ENCODE measurements at regions of chr4 and their contacts with region 1.

Region 1: GRCh38 chr4:118280501-118281218 is 72.1 kb downstream of the PRSS12 start:
- DNase-seq: no peak
- ATAC-seq: peak; percentile 38

Region 2: GRCh38 chr4:117447925-117448324 is 832.7 kb before region 1 on chr4:
- intact Hi-C with region 1: no loop called
- DNase-seq: no peak
- ATAC-seq: no peak

Region 3: DNA sequence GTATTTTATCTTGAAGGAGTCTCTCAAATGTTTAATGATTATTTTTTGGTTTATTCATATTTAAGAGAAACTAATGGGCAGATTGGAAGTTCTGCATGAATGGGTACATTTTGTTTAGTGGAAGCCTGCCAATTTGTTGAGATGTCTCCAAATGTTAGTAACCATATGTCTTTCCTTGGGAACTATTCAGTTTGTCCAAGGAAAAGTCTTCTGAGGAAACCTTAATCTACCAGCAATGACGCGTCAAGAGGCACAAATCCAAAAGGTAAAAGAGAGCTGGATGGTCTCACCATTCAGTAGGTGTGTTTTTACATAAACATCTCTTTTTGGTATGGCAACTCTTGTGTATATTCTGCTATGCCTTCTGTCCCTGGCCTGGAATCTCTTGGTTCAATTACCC is 283.8 kb before region 1 on chr4:
- intact Hi-C with region 1: no loop called
- DNase-seq: no peak
- ATAC-seq: no peak

Region 4: DNA sequence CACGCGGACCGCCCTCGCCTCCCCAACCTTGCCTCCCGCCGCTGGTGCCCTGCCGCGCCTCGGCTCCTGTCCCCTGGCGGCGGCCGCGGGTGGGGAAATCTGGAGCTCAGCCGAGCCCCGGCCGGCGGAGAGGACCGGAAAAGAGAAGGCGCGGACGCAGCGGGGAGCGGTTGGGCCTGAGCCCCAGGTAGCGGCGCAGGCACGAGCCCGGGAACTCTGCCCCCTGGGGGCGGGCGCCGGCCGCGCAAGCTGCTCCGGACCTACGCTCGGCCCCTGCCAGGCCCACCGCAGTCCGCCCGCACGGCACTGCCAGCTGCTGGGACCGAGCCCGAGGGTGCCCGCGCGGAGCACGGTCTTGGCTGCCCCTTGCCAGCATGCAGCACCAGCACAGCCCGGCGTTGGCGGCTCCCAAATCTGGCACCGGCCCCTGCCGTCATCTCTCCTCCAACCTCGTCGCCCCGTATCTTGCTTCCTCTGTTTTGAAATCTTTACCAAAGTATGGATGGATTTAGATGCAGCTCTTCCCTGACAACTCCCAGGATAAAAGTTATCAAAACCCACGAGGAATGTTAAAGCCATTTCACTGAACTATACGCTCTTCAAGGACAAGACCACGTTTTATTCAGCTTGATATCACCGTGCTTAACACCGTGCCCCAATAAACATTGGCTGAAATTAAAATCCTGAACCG is 72.3 kb after region 1 on chr4 and contains the start of gene PRSS12:
- intact Hi-C with region 1: loop called (anchors 2 kb)
- DNase-seq: peak; percentile 78
- ATAC-seq: peak; percentile 79
- total RNA-seq, gene PRSS12: not detected

Region 5: GRCh38 chr4:118684873-118685811 is 404.5 kb after region 1 on chr4 and contains the start of gene METTL14:
- intact Hi-C with region 1: loop called (anchors 10 kb)
- DNase-seq: peak; percentile 94
- ATAC-seq: peak; percentile 98
- total RNA-seq, gene METTL14: 27.4 TPM

Measured in Right ventricle myocardium inferior (tissue), 1 donor.